Mammary epithelial cell (primary cell): ENCODE measurements at regions of chr1 and their contacts with region 1.

Region 1: DNA sequence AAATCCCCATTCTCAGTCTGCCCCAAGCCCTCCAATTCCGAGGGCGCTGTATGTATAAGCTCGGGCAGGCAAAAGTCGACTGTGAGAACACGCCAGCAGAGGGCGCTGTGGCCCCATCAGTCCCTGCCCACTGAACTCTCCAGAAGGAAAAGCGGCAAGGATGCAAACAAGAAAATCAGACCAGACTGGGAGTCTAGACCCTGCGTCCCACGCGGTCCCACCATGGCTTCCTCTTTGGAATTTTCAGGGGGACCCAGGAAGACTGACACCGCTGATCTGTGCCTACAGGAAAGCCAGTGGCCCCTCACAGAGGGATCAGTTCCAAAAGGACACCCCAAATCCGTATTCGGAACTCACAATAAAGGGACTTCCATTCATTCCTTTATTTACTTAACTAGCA is 19.5 kb downstream of the TEX35 start:
- DNase-seq: peak; percentile 58
- H3K4me3 ChIP-seq: no peak overlapping the region
- H3K27ac ChIP-seq: no peak overlapping the region
- H3K4me1 ChIP-seq: peaks cover 31% of the 10 kb centered on the region
- H3K27me3 ChIP-seq: no peaks in the 10 kb centered on the region
- CTCF ChIP-seq: peak; percentile 89 to 92

Region 2: DNA sequence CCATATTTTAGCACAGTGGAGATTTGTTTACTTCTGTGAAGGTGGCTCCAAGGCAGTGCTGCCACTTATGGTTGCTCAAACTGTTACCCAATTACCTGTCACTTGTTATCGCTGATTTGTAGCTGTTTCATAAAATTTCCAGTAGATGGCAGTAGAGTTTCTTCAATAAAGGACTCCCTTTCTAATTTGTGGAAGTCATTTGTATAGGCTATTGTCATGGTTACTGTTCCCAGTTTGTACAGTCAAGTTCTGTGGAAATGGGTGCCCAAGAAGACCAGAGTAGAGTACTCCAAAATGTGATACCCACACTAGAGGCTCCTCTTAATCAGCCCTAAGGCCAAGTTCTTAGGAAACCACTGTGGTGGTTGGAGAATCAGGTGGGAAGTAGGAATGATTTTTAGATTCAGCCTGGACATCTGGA is 221.7 kb before region 1 on chr1:
- CTCF ChIA-PET with region 1: no interaction called
- dilution Hi-C with region 1: no loop called
- in situ Hi-C with region 1: no loop called
- intact Hi-C with region 1: loop called (anchors 1 kb)
- DNase-seq: peak; percentile 74
- H3K4me3 ChIP-seq: no peak overlapping the region
- H3K27ac ChIP-seq: peak overlapping the region; percentile 51
- H3K4me1 ChIP-seq: peaks cover 3% of the 10 kb centered on the region
- H3K27me3 ChIP-seq: no peaks in the 10 kb centered on the region
- CTCF ChIP-seq: peak; percentile 66 to 74

Region 3: GRCh38 chr1:178749581-178750166 is 217.3 kb after region 1 on chr1:
- CTCF ChIA-PET with region 1: no interaction called
- dilution Hi-C with region 1: no loop called
- in situ Hi-C with region 1: loop called in 1 of 2 experiments (anchors 10 kb)
- intact Hi-C with region 1: no loop called
- DNase-seq: no peak
- H3K4me3 ChIP-seq: no peak overlapping the region
- H3K27ac ChIP-seq: no peak overlapping the region
- H3K4me1 ChIP-seq: no peaks in the 10 kb centered on the region
- H3K27me3 ChIP-seq: no peaks in the 10 kb centered on the region
- CTCF ChIP-seq: no peak

Region 4: GRCh38 chr1:179002552-179003345 is 470.4 kb after region 1 on chr1:
- CTCF ChIA-PET with region 1: interaction called, 6 read pairs
- dilution Hi-C with region 1: loop called (anchors 5 kb)
- in situ Hi-C with region 1: loop called (anchors 5 to 10 kb)
- intact Hi-C with region 1: loop called (anchors 1 kb)
- DNase-seq: peak; percentile 27
- H3K4me3 ChIP-seq: no peak overlapping the region
- H3K27ac ChIP-seq: no peak overlapping the region
- H3K4me1 ChIP-seq: no peaks in the 10 kb centered on the region
- H3K27me3 ChIP-seq: no peaks in the 10 kb centered on the region
- CTCF ChIP-seq: peak; percentile 81 to 96

Region 5: GRCh38 chr1:179190861-179191260 is 658.5 kb after region 1 on chr1:
- CTCF ChIA-PET with region 1: no interaction called
- dilution Hi-C with region 1: no loop called
- in situ Hi-C with region 1: no loop called
- intact Hi-C with region 1: loop called (anchors 10 kb)
- DNase-seq: no peak
- H3K4me3 ChIP-seq: no peak overlapping the region
- H3K27ac ChIP-seq: no peak overlapping the region
- H3K4me1 ChIP-seq: no peaks in the 10 kb centered on the region
- H3K27me3 ChIP-seq: no peaks in the 10 kb centered on the region
- CTCF ChIP-seq: no peak